ENCODE measurements at regions of chr4 and their contacts with region 1.

Region 1: GRCh38 chr4:67327262-67328017 is 217.9 kb downstream of the CENPC start:
- DNase-seq: no peak

Region 2: DNA sequence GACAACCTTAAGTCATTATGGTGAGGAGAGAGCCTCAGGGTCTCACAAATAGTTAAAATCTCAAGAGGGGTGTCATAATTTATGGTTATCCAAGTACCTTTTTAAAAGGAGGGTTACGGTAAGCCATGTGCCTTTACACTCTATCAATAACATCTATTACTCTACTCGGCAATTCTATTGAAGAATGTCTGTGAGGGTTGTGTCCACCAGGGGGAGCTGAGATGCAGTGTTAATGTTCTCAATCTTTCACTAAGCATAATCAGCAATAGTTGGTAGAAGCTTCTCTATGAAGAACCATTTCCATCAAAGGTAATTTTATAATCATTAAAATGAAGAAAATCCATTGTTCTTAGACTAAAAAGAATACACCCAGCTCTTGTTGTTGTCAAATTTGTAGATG is 239.5 kb before region 1 on chr4:
- intact Hi-C with region 1: loop called (anchors 5 kb)
- DNase-seq: no peak

Region 3: DNA sequence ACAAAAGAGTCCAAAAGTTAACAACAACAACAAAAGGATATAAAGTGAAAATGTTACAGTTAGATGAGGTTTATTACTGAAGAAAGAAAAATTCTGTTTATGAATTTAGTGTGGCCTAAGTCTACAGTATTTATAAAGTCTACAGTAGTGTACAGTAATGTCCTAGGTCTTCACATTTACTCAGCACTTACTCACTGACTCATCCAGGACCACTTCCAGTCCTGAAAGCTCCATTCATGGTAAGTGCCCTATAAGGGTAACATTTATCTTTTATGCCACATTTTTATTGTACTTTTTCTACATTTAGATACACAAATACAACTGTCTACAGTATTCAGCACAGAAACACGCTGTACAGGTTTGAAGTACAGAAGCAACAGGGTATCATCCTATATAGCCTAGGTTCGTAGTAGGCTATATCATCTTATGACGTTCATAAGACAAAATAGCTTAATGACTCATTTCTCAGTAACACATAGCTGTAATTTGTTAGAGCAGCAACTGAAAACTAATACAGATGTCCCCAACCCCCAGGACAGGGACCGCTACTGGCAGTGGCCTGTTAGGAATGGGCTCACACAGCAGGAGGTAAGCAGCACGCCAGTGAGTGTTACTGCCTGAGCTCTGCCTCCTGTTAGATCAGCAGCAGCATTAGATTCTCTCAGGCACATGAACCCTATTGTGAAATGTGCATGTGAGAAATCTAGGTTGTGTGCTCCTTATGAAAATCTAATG is 156.6 kb after region 1 on chr4:
- intact Hi-C with region 1: no loop called
- DNase-seq: no peak

Region 4: DNA sequence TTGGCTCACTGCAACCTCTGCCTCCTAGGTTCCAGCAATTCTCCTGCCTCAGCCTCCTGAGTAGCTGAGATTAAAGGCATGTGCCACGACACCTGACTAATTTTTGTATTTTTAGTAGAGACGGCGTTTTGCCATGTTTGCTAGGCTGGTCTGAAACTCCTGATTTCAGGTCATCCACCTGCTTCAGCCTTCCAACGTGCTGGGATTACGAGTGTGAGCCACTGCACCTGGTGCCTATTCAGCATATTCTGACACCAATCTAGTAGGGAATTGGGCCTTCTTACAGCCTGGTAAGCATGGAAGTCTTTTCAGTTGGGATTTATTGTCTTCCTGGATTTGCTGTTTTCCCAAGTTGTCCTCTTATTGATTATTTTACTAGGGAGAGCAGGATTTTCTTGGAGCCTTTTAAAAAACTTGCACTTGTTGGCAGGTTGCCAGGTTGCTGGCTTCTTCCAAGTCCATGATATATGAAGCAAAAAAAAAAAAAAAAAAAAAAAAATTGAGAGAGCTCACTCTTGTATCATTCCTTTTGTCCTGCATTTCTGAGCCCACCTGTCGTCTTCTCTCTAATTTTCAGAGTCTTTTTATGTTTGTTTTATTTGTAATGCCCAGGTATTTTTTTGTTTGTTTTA is 1163.5 kb after region 1 on chr4:
- intact Hi-C with region 1: no loop called
- DNase-seq: no peak

Measured in cardiac septum (tissue), 1 donor.